ENCODE measurements at regions of chr14 and their contacts with region 1.

Region 1: GRCh38 chr14:94428610-94429009 is 24.0 kb downstream of the SERPINA11 start:
- DNase-seq: no peak
- ATAC-seq: no peak
- H3K4me3 Mint-ChIP-seq: no peak overlapping the region
- H3K27ac Mint-ChIP-seq: no peak overlapping the region
- H3K4me1 Mint-ChIP-seq: no peaks in the 10 kb centered on the region
- H3K27me3 Mint-ChIP-seq: no peaks in the 10 kb centered on the region

Region 2: DNA sequence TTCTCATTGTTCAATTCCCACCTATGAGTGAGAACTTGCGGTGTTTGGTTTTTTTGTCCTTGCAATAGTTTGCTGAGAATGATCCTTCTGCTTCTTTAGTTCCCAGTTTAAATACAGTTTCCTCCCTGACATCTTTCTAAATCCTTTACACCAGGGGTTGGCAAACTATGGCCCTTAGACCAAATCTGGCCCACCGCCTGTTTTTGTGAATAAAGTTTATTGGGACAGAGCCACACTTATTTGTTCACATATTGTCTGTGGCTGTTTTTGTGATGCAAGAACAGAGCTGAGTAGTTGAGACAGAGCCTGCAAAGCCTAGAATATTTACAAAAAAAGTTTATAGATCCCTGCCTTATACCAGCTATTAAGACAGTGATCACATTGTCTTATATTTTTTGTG is 189.2 kb before region 1 on chr14:
- CTCF ChIA-PET with region 1: no interaction called
- POLR2A ChIA-PET with region 1: no interaction called
- DNase-seq: no peak
- ATAC-seq: no peak
- H3K4me3 Mint-ChIP-seq: no peak overlapping the region
- H3K27ac Mint-ChIP-seq: no peak overlapping the region
- H3K4me1 Mint-ChIP-seq: no peaks in the 10 kb centered on the region
- H3K27me3 Mint-ChIP-seq: peaks cover 2% of the 10 kb centered on the region

Region 3: DNA sequence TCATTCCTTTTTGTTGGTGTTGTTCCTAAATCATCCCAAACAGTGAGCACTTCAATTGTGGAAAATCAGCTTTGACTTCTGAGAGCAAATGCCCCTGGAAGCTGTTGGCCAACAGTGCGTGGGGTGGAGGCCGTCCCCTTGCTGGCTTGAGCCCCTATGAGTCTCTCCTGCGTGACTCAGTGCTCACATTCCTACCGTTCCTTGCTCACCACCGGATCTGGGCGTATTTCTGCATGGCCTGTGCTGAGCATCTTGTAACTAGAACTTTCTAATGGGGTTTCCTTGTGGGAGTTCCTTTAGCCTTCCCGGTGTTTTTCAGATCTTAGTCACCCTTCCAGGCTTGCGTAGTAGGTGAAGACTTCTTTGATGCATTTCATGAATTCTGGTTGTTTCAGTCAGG is 54.9 kb before region 1 on chr14:
- CTCF ChIA-PET with region 1: no interaction called
- POLR2A ChIA-PET with region 1: no interaction called
- DNase-seq: no peak
- ATAC-seq: no peak
- H3K4me3 Mint-ChIP-seq: no peak overlapping the region
- H3K27ac Mint-ChIP-seq: no peak overlapping the region
- H3K4me1 Mint-ChIP-seq: no peaks in the 10 kb centered on the region
- H3K27me3 Mint-ChIP-seq: no peaks in the 10 kb centered on the region

Region 4: GRCh38 chr14:94460631-94461416 is 32.2 kb after region 1 on chr14:
- CTCF ChIA-PET with region 1: no interaction called
- POLR2A ChIA-PET with region 1: no interaction called
- DNase-seq: no peak
- ATAC-seq: no peak
- H3K4me3 Mint-ChIP-seq: no peak overlapping the region
- H3K27ac Mint-ChIP-seq: no peak overlapping the region
- H3K4me1 Mint-ChIP-seq: peaks cover 5% of the 10 kb centered on the region
- H3K27me3 Mint-ChIP-seq: peaks cover 13% of the 10 kb centered on the region

Region 5: DNA sequence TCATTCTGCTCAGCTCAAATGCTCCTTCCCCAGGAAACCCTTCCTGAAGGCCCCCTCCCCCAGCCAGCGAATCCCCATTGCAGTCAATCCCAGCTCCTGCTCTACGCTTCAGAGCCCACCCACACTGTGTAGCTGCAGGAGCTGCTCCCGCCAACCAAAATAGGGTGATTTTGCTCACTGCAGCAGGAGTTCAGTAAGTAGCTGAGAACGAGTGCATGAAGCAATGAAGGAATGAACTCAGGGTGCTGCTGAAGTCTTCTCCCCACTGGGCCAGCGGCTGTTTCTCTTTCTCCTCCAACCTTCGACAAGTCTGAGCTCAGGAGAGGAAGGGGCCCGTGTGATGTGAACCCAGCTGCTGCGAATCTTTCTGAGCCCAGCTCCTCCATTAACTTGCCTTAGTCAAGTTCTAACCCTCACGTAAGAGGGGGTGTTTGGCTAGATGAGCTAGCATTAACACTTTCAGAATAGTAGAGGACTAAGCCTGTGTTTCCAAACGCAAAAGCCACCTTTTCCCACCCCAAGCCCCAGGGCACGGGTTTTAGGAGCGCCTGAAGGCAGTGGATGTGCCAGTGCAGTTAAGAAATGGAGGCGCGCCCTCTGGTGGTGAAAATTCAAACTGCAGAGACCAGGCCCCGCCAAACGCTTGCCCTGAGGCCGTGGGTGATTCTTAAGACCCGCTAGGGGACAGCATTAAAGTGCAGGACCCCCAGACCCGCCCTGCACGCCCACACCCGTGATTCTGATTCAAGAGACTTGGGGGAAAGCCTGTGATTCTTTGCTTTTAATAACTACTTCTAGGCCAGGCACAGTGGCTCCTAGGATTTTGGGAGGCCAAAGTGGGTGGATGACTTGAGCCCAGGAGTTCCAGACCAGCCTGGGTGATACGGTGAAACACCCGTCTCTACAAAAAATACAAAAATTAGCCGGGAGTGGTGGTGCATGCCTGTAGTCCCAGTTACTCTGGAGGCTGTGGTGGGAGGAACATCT is 120.7 kb after region 1 on chr14:
- CTCF ChIA-PET with region 1: interaction called, 10 read pairs
- POLR2A ChIA-PET with region 1: interaction called, 3 read pairs
- DNase-seq: peak; percentile 69
- ATAC-seq: peak; percentile 69
- H3K4me3 Mint-ChIP-seq: no peak overlapping the region
- H3K27ac Mint-ChIP-seq: no peak overlapping the region
- H3K4me1 Mint-ChIP-seq: no peaks in the 10 kb centered on the region
- H3K27me3 Mint-ChIP-seq: peaks cover 19% of the 10 kb centered on the region

Measured in activated CD8-positive, alpha-beta T cell treated with anti-CD3 and anti-CD28 coated beads, Interleukin-2, amount 10 ng/mL, durations not matched to agents 7 days and 5 days (primary cell).